Posterior vena cava (tissue), 2 donors: ENCODE measurements at regions of chr3 and their contacts with region 1.

Region 1: DNA sequence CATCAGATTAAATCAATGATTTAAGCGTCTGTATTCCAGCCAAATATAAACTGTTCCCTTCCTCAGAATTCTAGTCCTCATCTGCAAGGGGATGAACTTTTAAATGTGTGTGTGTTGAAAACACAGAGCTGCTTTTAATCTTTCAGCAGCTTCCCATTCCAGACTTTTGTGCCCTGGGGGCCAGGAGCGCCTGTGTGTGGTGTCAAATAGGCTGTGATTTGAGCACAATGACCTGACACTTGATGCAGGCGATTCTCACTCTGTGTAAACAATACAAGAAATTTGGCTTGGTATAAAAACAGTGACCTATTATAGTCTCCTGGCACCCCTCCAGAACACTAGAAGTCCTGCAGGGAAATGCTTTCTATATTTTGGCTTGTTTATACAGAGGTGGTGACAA is 274.6 kb upstream of the ROPN1 start:
- DNase-seq: no peak

Region 2: DNA sequence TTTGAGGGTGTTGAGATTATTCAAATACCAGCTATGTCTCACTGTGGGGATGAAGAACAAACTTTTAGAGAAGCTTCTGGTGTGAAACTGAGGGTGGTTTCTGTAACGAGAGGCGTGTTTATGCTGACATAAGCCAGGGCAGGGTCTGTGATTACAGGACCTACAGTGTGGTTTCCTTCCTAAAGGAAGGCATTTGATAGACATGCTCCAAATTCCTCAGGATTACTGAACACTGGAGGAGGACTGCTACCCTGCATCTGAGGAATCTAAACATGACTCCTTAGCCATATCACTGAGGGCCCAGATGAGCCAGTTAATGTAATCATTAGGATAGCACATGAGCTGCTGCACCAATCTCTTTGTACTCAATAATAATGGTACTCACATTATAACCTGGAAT is 135.4 kb after region 1 on chr3:
- intact Hi-C with region 1: no loop called
- DNase-seq: no peak

Region 3: GRCh38 chr3:125381743-125382142 is 1115.3 kb after region 1 on chr3:
- intact Hi-C with region 1: loop called in 1 of 2 experiments (anchors 5 kb)
- DNase-seq: no peak